ENCODE measurements at regions of chr5 and their contacts with region 1.

Region 1: GRCh38 chr5:168696611-168697010 is 117.4 kb upstream of the PANK3 start:
- DNase-seq: no peak
- H3K4me3 ChIP-seq: no peak overlapping the region
- CTCF ChIP-seq: no peak

Region 2: GRCh38 chr5:168647083-168647482 is 49.5 kb before region 1 on chr5:
- CTCF ChIA-PET with region 1: no interaction called
- POLR2A ChIA-PET with region 1: no interaction called
- DNase-seq: peak; percentile 40
- H3K4me3 ChIP-seq: no peak overlapping the region
- CTCF ChIP-seq: no peak

Region 3: GRCh38 chr5:168667301-168667840 is 29.2 kb before region 1 on chr5:
- CTCF ChIA-PET with region 1: no interaction called
- POLR2A ChIA-PET with region 1: no interaction called
- DNase-seq: no peak
- H3K4me3 ChIP-seq: no peak overlapping the region
- CTCF ChIP-seq: no peak

Region 4: DNA sequence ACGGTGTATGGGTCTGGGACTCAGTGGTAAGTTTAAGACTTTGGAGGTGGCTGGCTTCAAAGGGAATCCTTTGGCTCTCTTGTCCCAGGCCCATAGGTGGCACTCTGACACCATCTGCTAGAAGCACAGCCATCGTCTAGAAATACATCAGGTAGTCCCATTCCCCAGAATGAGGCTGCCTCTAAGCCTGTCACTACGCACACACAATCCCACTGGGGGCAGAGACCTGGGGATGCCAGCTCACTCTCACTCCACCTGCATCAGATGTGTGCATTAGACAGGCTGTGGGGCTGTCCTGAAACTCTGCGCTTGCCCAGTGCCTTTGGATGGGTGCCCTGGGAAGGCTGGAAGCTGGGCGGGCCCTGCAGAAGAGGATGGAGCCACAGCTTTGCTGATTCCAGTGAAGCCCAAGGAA is 10.1 kb after region 1 on chr5:
- CTCF ChIA-PET with region 1: interaction called, 23 read pairs
- POLR2A ChIA-PET with region 1: no interaction called
- DNase-seq: no peak
- H3K4me3 ChIP-seq: no peak overlapping the region
- CTCF ChIP-seq: peak; percentile 79